Activated naive CD4-positive, alpha-beta T cell treated with anti-CD3 and anti-CD28 coated beads for 36 hours (primary cell): ENCODE measurements at regions of chr20 and their contacts with region 1.

Region 1: GRCh38 chr20:32314768-32315167 is 37.3 kb downstream of the KIF3B start:
- DNase-seq: no peak
- H3K4me3 Mint-ChIP-seq: no peak overlapping the region
- H3K27ac Mint-ChIP-seq: no peak overlapping the region
- H3K4me1 Mint-ChIP-seq: peaks cover 22% of the 10 kb centered on the region
- H3K27me3 Mint-ChIP-seq: no peaks in the 10 kb centered on the region

Region 2: GRCh38 chr20:32304131-32304746 is 10.5 kb before region 1 on chr20:
- CTCF ChIA-PET with region 1: interaction called, 4 read pairs
- intact Hi-C with region 1: loop called (anchors 1 kb)
- DNase-seq: no peak
- H3K4me3 Mint-ChIP-seq: no peak overlapping the region
- H3K27ac Mint-ChIP-seq: no peak overlapping the region
- H3K4me1 Mint-ChIP-seq: peaks cover 36% of the 10 kb centered on the region
- H3K27me3 Mint-ChIP-seq: no peaks in the 10 kb centered on the region

Region 3: GRCh38 chr20:32574296-32575226 is 259.8 kb after region 1 on chr20:
- CTCF ChIA-PET with region 1: no interaction called
- intact Hi-C with region 1: no loop called
- DNase-seq: peak; percentile 84
- H3K4me3 Mint-ChIP-seq: no peak overlapping the region
- H3K27ac Mint-ChIP-seq: no peak overlapping the region
- H3K4me1 Mint-ChIP-seq: peaks cover 39% of the 10 kb centered on the region
- H3K27me3 Mint-ChIP-seq: no peaks in the 10 kb centered on the region